T-cell (primary cell): ENCODE measurements at regions of chr6 and their contacts with region 1.

Region 1: GRCh38 chr6:155103816-155104366 is 108.8 kb downstream of the TIAM2 start:
- DNase-seq: peak in 2 of 35 experiments; percentile 1 to 32
- ATAC-seq: peak in 1 of 4 experiments; percentile 42
- H3K4me3 ChIP-seq: no peak overlapping the region
- H3K4me3 Mint-ChIP-seq: no peak overlapping the region
- H3K27ac ChIP-seq: no peak overlapping the region
- H3K27ac Mint-ChIP-seq: no peak overlapping the region
- H3K4me1 ChIP-seq: no peaks in the 10 kb centered on the region
- H3K4me1 Mint-ChIP-seq: peaks cover 5 to 15% (median 9%) of the 10 kb centered on the region in 3 donors
- H3K27me3 ChIP-seq: peaks cover 0 to 3% of the 10 kb centered on the region in 2 experiments
- H3K27me3 Mint-ChIP-seq: peaks cover 0 to 4% of the 10 kb centered on the region in 2 donors

Region 2: DNA sequence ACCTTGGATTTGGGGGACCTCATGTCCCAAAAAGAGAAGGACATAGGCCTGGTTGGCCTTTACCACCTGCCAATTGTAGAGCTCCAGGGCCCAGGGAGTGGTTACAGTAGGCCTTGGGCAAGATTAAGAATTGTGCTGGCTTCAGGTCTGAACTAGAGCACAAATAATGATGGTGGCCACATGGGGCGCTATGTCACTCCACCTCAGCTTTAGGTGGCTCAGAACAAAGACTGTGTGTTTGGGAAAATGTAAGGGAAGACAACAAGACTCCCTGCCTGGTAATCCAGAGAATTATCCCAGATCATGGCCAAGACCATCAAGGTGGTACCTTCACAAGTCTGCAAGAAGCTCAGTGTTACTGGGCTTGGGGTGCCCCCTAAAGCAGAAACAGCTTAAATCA is 1289.8 kb before region 1 on chr6:
- CTCF ChIA-PET with region 1: no interaction called
- POLR2A ChIA-PET with region 1: no interaction called
- DNase-seq: no peak
- ATAC-seq: no peak
- H3K4me3 ChIP-seq: no peak overlapping the region
- H3K4me3 Mint-ChIP-seq: no peak overlapping the region
- H3K27ac ChIP-seq: no peak overlapping the region
- H3K27ac Mint-ChIP-seq: no peak overlapping the region
- H3K4me1 ChIP-seq: no peaks in the 10 kb centered on the region
- H3K4me1 Mint-ChIP-seq: no peaks in the 10 kb centered on the region
- H3K27me3 ChIP-seq: no peaks in the 10 kb centered on the region
- H3K27me3 Mint-ChIP-seq: peaks cover 0 to 7% of the 10 kb centered on the region in 2 donors

Region 3: GRCh38 chr6:154092326-154092962 is 1011.4 kb before region 1 on chr6:
- CTCF ChIA-PET with region 1: no interaction called
- POLR2A ChIA-PET with region 1: interaction called in 1 of 2 experiments, 18 read pairs
- DNase-seq: no peak
- ATAC-seq: no peak
- H3K4me3 ChIP-seq: no peak overlapping the region
- H3K4me3 Mint-ChIP-seq: no peak overlapping the region
- H3K27ac ChIP-seq: no peak overlapping the region
- H3K27ac Mint-ChIP-seq: no peak overlapping the region
- H3K4me1 ChIP-seq: no peaks in the 10 kb centered on the region
- H3K4me1 Mint-ChIP-seq: no peaks in the 10 kb centered on the region
- H3K27me3 ChIP-seq: peaks cover 0 to 1% of the 10 kb centered on the region in 2 experiments
- H3K27me3 Mint-ChIP-seq: peaks cover 5 to 6% of the 10 kb centered on the region in 2 donors

Region 4: GRCh38 chr6:155188707-155189496 is 85.0 kb after region 1 on chr6:
- CTCF ChIA-PET with region 1: no interaction called
- POLR2A ChIA-PET with region 1: no interaction called
- DNase-seq: peak in 1 of 35 experiments; percentile 17
- ATAC-seq: peak in 3 of 4 experiments; percentile 71 to 76 (median 74)
- H3K4me3 ChIP-seq: no peak overlapping the region
- H3K4me3 Mint-ChIP-seq: peak overlapping the region in 2 of 3 donors; percentile 34 to 45
- H3K27ac ChIP-seq: no peak overlapping the region
- H3K27ac Mint-ChIP-seq: peak overlapping the region; percentile 14 to 76
- H3K4me1 ChIP-seq: peaks cover 4 to 11% of the 10 kb centered on the region in 2 experiments
- H3K4me1 Mint-ChIP-seq: peaks cover 12 to 44% (median 27%) of the 10 kb centered on the region in 3 donors
- H3K27me3 ChIP-seq: no peaks in the 10 kb centered on the region
- H3K27me3 Mint-ChIP-seq: no peaks in the 10 kb centered on the region